ENCODE measurements at regions of chr22 and their contacts with region 1.

Region 1: DNA sequence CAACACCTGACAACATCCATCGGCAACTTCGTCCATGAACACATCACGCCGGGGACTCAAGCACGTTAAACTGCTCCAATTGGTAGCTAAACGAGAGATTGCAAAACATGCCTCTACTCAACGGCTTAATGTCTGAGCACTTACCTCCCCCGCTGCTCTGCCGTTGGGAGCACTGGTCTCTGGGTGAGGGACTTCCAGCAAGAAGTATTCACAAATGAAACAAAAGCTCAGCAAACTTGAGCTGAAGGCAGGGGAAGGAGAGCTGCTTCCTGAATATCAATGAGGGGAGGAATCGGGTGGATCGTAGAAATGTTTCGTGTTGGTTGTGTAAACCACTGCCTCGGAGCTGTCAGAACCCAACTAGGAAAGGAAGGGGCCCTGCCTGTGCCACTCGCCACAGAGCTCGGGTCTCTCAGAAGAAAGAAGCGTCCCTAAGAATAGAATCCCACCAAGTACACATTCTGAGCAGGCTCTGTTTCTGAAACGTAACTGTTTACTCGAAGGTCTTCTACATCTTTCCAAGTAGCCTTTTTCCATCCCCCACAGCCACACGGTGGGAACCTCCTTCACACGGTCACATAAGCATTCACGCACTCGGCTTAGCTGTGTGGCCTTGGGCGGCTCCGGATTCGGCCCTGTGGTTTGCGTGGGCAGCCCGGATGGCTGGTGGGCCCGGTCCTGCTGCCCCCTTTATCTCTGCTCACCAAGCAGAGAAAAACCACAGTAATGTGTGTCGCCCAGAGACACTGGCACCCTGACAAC is at the start of gene MLC1:
- DNase-seq: peak; percentile 25
- ATAC-seq: no peak
- H3K4me3 ChIP-seq: no peak within 1 kb of the TSS
- H3K27ac ChIP-seq: no peak within 1 kb of the TSS
- H3K4me1 ChIP-seq: peaks cover 9% of the 10 kb centered on the region; the same call in 1 of the 2 replicates
- H3K27me3 ChIP-seq: no peaks in the 10 kb centered on the region
- CTCF ChIP-seq: no peak
- POLR2A ChIP-seq: no peak
- RAD21 ChIP-seq: no peak
- total RNA-seq, gene MLC1: not detected in 2 replicates

Region 2: DNA sequence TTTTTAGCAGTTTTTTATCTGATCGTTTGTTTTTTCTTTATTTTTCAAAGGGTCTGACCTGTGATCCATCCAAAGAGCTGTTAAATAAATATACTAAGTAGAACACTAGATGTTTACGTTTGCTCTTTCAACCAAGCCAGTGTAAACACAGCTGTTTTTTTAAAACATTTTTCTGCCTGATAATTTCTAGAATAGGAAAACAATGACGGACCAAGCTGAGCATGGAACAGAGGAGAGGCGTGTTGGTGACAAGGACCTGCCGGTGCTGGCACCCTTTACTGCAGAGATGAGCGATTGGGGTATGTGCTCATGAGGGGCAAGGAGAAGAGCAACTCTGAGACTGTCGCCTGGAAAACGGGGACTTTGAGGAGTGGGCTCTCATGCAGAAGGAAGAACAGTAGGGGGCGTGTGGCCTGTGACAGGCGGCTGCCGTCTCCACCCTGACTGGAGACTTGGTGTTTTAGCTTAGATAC is 56.5 kb after region 1 on chr22:
- CTCF ChIA-PET with region 1: no interaction called
- POLR2A ChIA-PET with region 1: no interaction called
- dilution Hi-C with region 1: no loop called
- in situ Hi-C with region 1: no loop called
- intact Hi-C with region 1: loop called (anchors 5 kb)
- DNase-seq: peak; percentile 52
- ATAC-seq: peak; percentile 68
- H3K4me3 ChIP-seq: no peak overlapping the region
- H3K27ac ChIP-seq: peak overlapping the region; percentile 5; the same call in 1 of the 2 replicates
- H3K4me1 ChIP-seq: peaks cover 15% of the 10 kb centered on the region
- H3K27me3 ChIP-seq: peaks cover 4% of the 10 kb centered on the region
- CTCF ChIP-seq: peak; percentile 13; the same call in 1 of the 2 replicates
- POLR2A ChIP-seq: no peak
- RAD21 ChIP-seq: no peak

Measured in IMR-90 (cell line).